Left colon (tissue), 2 donors: ENCODE measurements at regions of chr4 and their contacts with region 1.

Region 1: GRCh38 chr4:15253201-15253748 is 174.6 kb upstream of the C1QTNF7 start:
- DNase-seq: no peak
- ATAC-seq: no peak

Region 2: GRCh38 chr4:15385928-15386327 is 132.7 kb after region 1 on chr4:
- intact Hi-C with region 1: loop called in 1 of 2 experiments (anchors 5 kb)
- DNase-seq: no peak
- ATAC-seq: no peak